Caco-2 (cell line): ENCODE measurements at regions of chr4 and their contacts with region 1.

Region 1: GRCh38 chr4:82851885-82852750 is 38.8 kb downstream of the SEC31A start:
- DNase-seq: peak in 1 of 2 experiments; percentile 47
- H3K4me3 ChIP-seq: no peak overlapping the region
- H3K4me3 Mint-ChIP-seq: no peak overlapping the region
- H3K27ac Mint-ChIP-seq: peak overlapping the region; percentile 57
- H3K4me1 ChIP-seq: no peaks in the 10 kb centered on the region
- H3K4me1 Mint-ChIP-seq: no peaks in the 10 kb centered on the region
- H3K27me3 ChIP-seq: no peaks in the 10 kb centered on the region
- H3K27me3 Mint-ChIP-seq: no peaks in the 10 kb centered on the region
- CTCF ChIP-seq: peak; percentile 28 to 60

Region 2: GRCh38 chr4:82890901-82891706 is 39.0 kb after region 1 on chr4 and contains the start of gene SEC31A:
- CTCF ChIA-PET with region 1: interaction called, 4 read pairs
- POLR2A ChIA-PET with region 1: no interaction called
- intact Hi-C with region 1: loop called (anchors 2 kb)
- DNase-seq: peak; percentile 96
- H3K4me3 ChIP-seq: peak within 1 kb of the TSS; percentile 73
- H3K4me3 Mint-ChIP-seq: peak within 1 kb of the TSS; percentile 94
- H3K27ac Mint-ChIP-seq: peak within 1 kb of the TSS; percentile 95
- H3K4me1 ChIP-seq: peaks cover 45% of the 10 kb centered on the region
- H3K4me1 Mint-ChIP-seq: peaks cover 28% of the 10 kb centered on the region
- H3K27me3 ChIP-seq: no peaks in the 10 kb centered on the region
- H3K27me3 Mint-ChIP-seq: no peaks in the 10 kb centered on the region
- CTCF ChIP-seq: no peak
- total RNA-seq, gene SEC31A: 175 and 187 TPM in 2 replicates